Activated CD8-positive, alpha-beta T cell treated with anti-CD3 and anti-CD28 coated beads, Interleukin-2, amount 10 ng/mL, durations not matched to agents 7 days and 5 days (primary cell): ENCODE measurements at regions of chr22 and their contacts with region 1.

Region 1: DNA sequence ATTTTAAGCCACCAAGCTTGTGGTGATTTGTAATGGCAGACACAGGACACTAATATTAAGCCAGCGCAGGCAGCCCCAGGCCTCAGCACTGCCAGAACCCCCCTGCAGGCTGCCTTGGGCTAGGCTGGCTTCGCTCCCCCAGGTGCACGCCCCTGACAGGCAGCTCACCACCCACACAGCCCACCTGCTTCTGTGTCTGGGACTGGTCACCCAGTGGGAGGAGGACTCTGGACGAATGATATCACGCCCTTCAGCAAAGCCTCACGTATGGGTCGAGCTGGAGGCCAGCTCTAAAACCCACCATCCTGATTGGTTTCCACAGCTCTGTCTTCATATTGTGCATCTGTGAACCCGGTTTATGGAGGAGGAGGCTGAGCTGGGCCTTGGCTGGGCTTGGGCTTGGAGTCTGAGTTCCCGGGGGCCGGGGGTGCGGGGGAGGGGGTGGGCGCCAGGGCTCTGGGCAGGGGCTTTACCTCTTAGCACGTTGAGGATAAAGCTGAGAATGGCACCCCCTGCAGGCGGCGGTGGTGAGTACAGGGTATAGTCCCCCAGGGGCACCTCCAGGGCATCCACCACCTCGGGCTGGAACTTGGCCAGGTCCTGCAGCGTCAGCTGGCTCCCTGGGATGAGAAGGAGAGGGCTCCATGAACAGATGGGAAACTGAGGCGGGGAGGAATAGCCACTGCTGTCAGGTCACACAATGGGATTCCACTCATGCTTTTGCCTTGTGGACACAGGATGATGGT is 13.8 kb downstream of the GGT5 start:
- DNase-seq: peak; percentile 75
- ATAC-seq: peak; percentile 87
- H3K4me3 Mint-ChIP-seq: no peak overlapping the region
- H3K27ac Mint-ChIP-seq: peak overlapping the region; percentile 82
- H3K4me1 Mint-ChIP-seq: peaks cover 5% of the 10 kb centered on the region
- H3K27me3 Mint-ChIP-seq: no peaks in the 10 kb centered on the region

Region 2: GRCh38 chr22:24189249-24190158 is 41.6 kb before region 1 on chr22:
- CTCF ChIA-PET with region 1: interaction called, 21 read pairs
- POLR2A ChIA-PET with region 1: no interaction called
- DNase-seq: peak; percentile 73
- ATAC-seq: peak; percentile 77
- H3K4me3 Mint-ChIP-seq: no peak overlapping the region
- H3K27ac Mint-ChIP-seq: no peak overlapping the region
- H3K4me1 Mint-ChIP-seq: peaks cover 11% of the 10 kb centered on the region
- H3K27me3 Mint-ChIP-seq: no peaks in the 10 kb centered on the region

Region 3: DNA sequence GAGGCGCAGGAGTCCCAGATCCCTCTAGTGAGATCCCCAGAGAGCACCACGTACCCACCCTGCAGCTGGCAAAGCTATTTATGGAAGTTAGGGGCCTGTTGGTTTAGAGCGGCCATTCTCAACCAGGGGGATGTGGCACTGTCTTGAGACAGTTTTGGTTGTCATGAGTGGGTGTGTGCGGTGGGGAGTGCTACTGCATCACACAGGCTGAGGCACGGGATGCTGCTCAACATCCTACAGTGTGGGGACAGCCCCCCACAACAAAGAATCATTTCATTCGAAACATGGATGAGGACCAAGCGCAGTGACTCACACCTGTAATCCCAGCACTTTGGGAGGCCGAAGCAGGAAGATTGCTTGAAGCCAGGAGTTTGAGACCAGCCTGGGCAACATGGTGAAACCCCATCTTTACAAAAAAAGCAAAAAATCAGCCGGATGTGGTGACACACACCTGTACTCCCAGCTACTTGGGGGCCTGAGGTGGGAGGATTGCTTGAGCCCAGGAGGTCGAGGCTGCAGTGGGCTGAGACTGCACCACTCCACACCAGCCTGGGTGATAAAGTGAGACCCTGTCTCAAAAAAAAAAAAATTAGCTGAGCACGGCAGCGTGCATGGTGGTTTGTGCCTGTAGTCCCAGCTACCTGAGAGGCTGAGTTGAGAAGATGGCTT is 14.4 kb before region 1 on chr22:
- CTCF ChIA-PET with region 1: interaction called, 16 read pairs
- POLR2A ChIA-PET with region 1: no interaction called
- DNase-seq: peak; percentile 43
- ATAC-seq: peak; percentile 44
- H3K4me3 Mint-ChIP-seq: no peak overlapping the region
- H3K27ac Mint-ChIP-seq: peak overlapping the region; percentile 76
- H3K4me1 Mint-ChIP-seq: peaks cover 19% of the 10 kb centered on the region
- H3K27me3 Mint-ChIP-seq: peaks cover 6% of the 10 kb centered on the region